A673 (cell line): ENCODE measurements at regions of chr1 and their contacts with region 1.

Region 1: DNA sequence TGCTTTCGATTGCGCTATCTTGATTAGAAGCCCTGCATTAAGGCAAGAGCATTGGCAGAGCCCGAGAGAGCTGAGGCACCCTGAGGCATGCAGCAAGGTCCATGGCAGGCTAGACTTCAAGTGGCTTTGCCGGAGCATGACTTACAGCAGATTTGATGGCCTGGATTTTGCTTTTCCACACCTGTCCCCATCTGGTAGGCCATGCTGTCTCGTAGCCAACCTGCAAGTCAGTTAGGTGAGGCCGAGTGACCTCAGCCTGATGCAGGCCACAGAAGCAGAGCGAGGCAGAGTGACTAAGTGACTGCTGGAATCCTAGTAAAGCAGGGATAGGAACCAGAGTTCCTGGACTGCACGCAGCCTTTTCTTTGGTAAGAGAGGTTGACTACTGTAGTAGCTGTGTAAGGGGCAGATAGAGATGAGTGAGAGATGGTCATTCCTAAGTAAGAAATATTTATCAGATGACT is 148.9 kb downstream of the PBX1 start:
- DNase-seq: no peak
- H3K4me3 ChIP-seq: no peak overlapping the region
- H3K27ac ChIP-seq: no peak overlapping the region
- H3K4me1 ChIP-seq: peaks cover 35% of the 10 kb centered on the region
- H3K27me3 ChIP-seq: no peaks in the 10 kb centered on the region
- CTCF ChIP-seq: no peak

Region 2: GRCh38 chr1:164560071-164560470 is 147.8 kb before region 1 on chr1:
- CTCF ChIA-PET with region 1: no interaction called
- POLR2A ChIA-PET with region 1: no interaction called
- intact Hi-C with region 1: no loop called
- DNase-seq: no peak
- H3K4me3 ChIP-seq: peak overlapping the region; percentile 82
- H3K27ac ChIP-seq: peak overlapping the region; percentile 72
- H3K4me1 ChIP-seq: peaks cover 38% of the 10 kb centered on the region
- H3K27me3 ChIP-seq: no peaks in the 10 kb centered on the region
- CTCF ChIP-seq: no peak

Region 3: DNA sequence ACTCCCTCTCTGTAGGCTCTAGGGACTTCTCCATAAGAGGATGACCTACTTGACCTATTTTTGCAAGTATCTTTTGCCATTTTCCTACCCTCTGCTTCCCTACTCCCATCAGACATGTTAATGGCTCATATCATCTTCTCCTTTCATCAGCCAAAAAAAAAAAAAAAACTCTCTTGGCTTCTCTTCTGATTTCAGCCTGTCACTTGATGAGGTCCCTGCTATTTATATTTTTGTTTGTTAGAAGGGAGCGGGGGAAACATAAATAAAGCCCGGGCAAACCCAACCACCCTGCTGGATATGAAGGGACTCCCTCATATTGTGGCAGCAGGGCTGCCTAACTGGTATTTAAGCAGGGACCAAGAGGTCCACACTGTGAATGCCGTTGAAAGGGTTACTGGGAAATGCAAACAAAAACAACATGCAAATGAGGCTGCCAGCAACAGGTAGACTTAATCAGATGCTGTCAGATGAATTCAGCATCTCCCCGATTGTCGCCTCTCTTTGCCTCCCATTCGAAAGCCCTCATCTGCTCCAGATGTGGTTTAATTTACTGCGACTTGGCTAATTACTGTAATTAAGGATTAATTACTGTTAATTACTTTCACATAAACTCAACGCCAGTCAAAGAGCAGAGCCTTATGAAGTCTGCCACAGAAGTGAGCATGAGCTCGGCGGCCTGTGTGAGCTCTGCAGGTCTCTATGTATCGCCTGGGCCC is 23.4 kb after region 1 on chr1:
- CTCF ChIA-PET with region 1: no interaction called
- POLR2A ChIA-PET with region 1: no interaction called
- intact Hi-C with region 1: loop called (anchors 2 kb)
- DNase-seq: no peak
- H3K4me3 ChIP-seq: no peak overlapping the region
- H3K27ac ChIP-seq: no peak overlapping the region
- H3K4me1 ChIP-seq: peaks cover 16% of the 10 kb centered on the region
- H3K27me3 ChIP-seq: no peaks in the 10 kb centered on the region
- CTCF ChIP-seq: no peak

Region 4: GRCh38 chr1:164774819-164775654 is 67.1 kb after region 1 on chr1:
- CTCF ChIA-PET with region 1: no interaction called
- POLR2A ChIA-PET with region 1: no interaction called
- intact Hi-C with region 1: loop called (anchors 5 kb)
- DNase-seq: peak; percentile 52
- H3K4me3 ChIP-seq: no peak overlapping the region
- H3K27ac ChIP-seq: no peak overlapping the region
- H3K4me1 ChIP-seq: peaks cover 20% of the 10 kb centered on the region
- H3K27me3 ChIP-seq: no peaks in the 10 kb centered on the region
- CTCF ChIP-seq: no peak